ENCODE measurements at regions of chr5 and their contacts with region 1.

Region 1: GRCh38 chr5:41869739-41870626 is at the start of gene OXCT1:
- DNase-seq: peak; percentile 93
- total RNA-seq, gene OXCT1: 269 TPM

Region 2: GRCh38 chr5:41770799-41771198 is 99.2 kb before region 1 on chr5:
- intact Hi-C with region 1: no loop called
- DNase-seq: no peak

Region 3: GRCh38 chr5:41903892-41904799 is 34.2 kb after region 1 on chr5 and contains the start of gene RIMOC1:
- intact Hi-C with region 1: loop called (anchors 1 kb)
- DNase-seq: peak; percentile 99
- total RNA-seq, gene RIMOC1: 15.3 TPM

Region 4: DNA sequence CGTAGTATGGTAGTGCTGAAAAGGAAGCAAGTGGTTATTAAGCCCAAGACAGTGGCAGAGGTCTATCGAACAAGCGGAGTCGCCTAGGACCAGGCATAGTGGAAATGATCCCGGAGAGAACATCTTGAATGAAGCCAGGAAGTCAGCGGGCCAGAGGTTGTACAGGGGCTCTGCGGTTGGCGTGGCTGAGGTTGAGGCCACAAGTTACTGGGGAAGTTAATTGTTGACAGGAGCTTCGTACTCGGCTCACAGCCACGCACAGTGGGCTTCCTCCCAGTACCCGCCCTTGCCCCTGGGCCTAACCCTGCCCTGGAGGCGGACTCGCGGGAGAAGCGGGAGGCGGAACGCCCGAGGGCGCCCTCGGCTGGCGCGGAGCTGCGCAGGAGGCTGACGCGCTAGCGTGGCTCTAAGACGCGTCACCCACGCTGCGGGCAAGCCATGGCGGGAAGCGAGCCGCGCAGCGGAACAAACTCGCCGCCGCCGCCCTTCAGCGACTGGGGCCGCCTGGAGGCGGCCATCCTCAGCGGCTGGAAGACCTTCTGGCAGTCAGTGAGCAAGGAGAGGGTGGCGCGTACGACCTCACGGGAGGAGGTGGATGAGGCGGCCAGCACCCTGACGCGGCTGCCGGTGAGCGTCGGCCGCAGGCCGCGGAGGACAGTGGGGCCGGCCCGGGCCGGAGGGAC is 55.0 kb after region 1 on chr5 and contains the start of gene FBXO4:
- intact Hi-C with region 1: loop called (anchors 1 kb)
- DNase-seq: peak; percentile 95
- total RNA-seq, gene FBXO4: 5.1 TPM

Region 5: DNA sequence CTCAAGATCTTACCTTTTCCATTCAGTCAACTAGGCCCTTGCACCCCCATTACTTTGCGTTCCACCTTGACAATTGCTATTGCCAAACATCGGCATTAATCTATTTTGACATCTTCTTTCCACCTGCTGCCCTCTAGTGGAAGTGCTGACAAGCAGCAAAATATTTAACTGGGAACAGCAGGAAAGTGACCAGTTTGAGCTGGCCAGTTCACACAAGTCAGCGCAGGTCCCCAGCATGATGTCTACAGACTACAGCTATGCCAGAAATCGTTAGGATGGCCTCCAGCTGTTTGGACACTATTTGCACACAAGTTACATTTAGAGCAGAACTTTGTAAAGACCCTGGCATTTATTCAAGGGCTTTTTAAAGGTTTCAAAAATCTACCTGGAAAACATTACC is 713.3 kb after region 1 on chr5:
- intact Hi-C with region 1: loop called (anchors 10 kb)
- DNase-seq: no peak

Measured in cardiac septum (tissue), 1 donor.